AG04449 (cell line): ENCODE measurements at regions of chr1 and their contacts with region 1.

Region 1: DNA sequence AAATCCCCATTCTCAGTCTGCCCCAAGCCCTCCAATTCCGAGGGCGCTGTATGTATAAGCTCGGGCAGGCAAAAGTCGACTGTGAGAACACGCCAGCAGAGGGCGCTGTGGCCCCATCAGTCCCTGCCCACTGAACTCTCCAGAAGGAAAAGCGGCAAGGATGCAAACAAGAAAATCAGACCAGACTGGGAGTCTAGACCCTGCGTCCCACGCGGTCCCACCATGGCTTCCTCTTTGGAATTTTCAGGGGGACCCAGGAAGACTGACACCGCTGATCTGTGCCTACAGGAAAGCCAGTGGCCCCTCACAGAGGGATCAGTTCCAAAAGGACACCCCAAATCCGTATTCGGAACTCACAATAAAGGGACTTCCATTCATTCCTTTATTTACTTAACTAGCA is 19.5 kb downstream of the TEX35 start:
- DNase-seq: no peak
- H3K4me3 ChIP-seq: no peak overlapping the region
- CTCF ChIP-seq: peak; percentile 91

Region 2: GRCh38 chr1:178300352-178300699 is 232.1 kb before region 1 on chr1:
- CTCF ChIA-PET with region 1: interaction called, 22 read pairs
- POLR2A ChIA-PET with region 1: no interaction called
- DNase-seq: no peak
- H3K4me3 ChIP-seq: no peak overlapping the region
- CTCF ChIP-seq: no peak

Region 3: GRCh38 chr1:178310685-178311105 is 221.7 kb before region 1 on chr1:
- CTCF ChIA-PET with region 1: interaction called, 69 read pairs
- POLR2A ChIA-PET with region 1: no interaction called
- DNase-seq: peak; percentile 34
- H3K4me3 ChIP-seq: no peak overlapping the region
- CTCF ChIP-seq: peak; percentile 43

Region 4: GRCh38 chr1:178542560-178543356 is 10.4 kb after region 1 on chr1:
- CTCF ChIA-PET with region 1: interaction called, 11 read pairs
- POLR2A ChIA-PET with region 1: no interaction called
- DNase-seq: no peak
- H3K4me3 ChIP-seq: peak overlapping the region; percentile 72
- CTCF ChIP-seq: peak; percentile 93

Region 5: DNA sequence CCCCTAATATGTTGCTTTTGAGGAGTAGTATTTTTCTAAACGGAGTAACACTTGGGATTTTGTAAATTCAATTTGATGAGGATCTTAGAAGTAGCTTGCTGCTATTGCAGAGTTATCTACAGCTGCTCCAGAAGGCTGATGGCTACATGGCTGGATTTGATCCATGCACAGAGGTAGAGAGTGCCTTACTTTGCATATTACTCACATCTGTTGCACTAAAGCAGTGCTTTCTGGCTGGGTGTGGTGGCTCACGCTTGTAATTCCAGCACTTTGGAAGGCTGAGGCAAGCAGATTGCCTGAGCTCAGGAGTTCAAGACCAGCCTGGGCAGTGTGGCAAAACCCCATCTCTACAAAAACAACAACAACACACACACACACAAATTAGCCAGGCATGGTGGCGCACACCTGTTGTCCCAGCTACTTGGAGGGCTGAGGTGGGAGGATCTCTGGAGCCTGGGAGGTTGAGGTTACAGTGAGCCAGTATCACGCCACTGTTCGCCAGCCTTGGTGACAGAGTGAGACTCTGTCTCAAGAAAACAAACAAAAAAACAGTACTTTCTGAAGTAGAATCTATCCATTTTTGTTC is 217.3 kb after region 1 on chr1:
- CTCF ChIA-PET with region 1: interaction called, 106 read pairs
- POLR2A ChIA-PET with region 1: no interaction called
- DNase-seq: no peak
- H3K4me3 ChIP-seq: no peak overlapping the region
- CTCF ChIP-seq: no peak

Region 6: GRCh38 chr1:179058487-179059483 is 526.4 kb after region 1 on chr1:
- CTCF ChIA-PET with region 1: interaction called, 10 read pairs
- POLR2A ChIA-PET with region 1: no interaction called
- DNase-seq: peak; percentile 29
- H3K4me3 ChIP-seq: no peak overlapping the region
- CTCF ChIP-seq: no peak